ENCODE measurements at regions of chr5 and their contacts with region 1.

Region 1: DNA sequence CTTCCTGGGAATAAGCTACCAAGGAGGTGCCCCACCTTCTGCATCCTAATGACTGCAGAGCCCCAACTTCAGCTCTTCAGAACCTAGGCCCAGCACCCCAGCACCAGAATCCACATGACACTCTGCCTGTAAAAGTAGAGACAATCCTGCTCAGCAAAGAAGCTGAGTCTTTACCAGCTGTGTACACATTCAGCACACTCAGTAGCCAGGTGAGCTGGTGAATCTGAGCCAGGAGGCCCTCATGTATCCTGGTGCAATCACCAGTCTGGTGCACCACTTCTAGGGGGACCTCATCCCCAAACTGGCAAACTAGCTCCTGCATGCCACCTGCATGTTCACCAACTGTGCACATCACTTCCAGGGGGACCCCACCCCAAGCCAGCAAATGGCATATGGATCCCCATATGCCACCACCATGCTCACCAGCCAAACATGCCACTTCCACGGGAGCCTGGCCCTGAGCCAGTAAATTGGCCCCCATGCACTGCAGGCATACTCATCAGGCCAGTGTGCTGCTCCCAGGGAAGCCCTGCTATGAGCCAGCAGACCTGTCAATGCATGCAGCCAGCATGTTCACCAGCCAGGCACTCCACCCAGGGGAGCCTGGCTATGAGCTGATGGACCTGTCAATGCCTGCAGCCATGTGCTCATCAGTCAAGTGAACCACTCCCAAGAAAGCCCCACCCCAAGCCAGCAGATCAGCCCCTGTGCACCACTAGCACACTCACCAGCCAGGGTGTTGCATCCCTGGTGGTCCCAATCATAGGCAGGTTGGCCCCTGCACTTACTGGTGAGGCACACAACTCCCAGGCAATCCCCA is 15.6 kb upstream of the BTNL9 start:
- DNase-seq: no peak
- H3K4me3 ChIP-seq: no peak overlapping the region
- H3K27ac ChIP-seq: no peak overlapping the region
- H3K4me1 ChIP-seq: no peaks in the 10 kb centered on the region
- H3K27me3 ChIP-seq: peaks cover 0 to 30% (median 0%) of the 10 kb centered on the region in 4 donors
- CTCF ChIP-seq: no peak
- EP300 ChIP-seq: no peak
- POLR2A ChIP-seq: no peak

Region 2: DNA sequence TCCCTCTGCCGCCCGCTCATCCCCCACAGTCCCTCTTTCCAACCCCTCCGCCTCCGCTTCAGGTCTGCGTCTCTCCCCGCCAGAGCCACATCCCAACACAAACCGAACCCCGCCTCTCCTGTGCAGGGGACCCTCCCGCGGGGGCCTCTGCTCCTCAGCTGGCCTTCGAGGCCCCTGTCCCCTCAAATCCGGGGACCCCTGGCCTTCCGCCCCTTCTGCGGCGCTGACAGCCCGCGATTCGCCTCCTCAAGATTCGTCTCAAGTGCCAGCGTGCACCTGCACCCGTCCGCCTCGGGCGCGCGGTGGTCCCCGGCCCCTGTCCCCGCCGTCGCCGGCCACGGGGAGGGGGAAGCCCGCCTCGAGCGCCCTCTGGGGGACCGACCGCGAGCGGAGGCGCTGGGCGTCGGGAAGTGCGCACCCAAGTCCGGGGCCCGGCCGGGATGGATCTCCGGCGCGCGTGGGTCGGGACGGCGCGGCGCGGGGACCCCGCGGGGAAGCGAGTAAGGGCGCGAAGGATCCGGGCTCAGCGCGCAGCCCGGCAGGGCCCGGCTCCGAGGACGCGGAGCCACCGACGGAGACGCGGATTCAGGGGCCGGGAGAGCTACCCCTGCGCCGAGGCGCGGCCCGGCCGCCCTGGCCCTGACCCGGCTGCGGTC is 375.7 kb before region 1 on chr5:
- intact Hi-C with region 1: no loop called
- DNase-seq: no peak
- H3K4me3 ChIP-seq: peak overlapping the region; percentile 52 to 61 (median 53)
- H3K27ac ChIP-seq: peak overlapping the region in 2 of 4 donors; percentile 48 to 53
- H3K4me1 ChIP-seq: peaks cover 9 to 44% (median 27%) of the 10 kb centered on the region in 4 donors
- H3K27me3 ChIP-seq: peaks cover 0 to 93% (median 13%) of the 10 kb centered on the region in 4 donors
- CTCF ChIP-seq: peak in 1 of 3 experiments; percentile 11
- EP300 ChIP-seq: no peak
- POLR2A ChIP-seq: no peak

Region 3: DNA sequence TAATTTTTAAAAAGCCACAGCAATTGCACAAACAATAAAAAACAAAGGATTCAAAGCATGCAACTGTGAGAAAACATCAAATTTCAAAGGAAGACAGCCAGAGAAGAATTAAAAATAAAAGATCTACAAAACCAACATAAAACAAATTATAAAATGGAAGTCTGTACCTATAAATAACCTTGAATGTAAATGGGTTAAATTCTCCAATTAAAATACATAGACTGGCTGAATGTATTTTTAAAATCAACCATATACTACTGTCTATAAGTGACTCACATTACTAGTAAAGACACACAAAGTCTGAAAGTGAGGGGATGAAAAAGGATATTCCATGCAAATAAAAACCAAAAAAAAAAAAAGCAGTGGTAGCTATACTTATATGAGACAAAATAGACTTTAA is 91.8 kb before region 1 on chr5:
- intact Hi-C with region 1: loop called (anchors 5 kb)
- DNase-seq: no peak
- H3K4me3 ChIP-seq: no peak overlapping the region
- H3K27ac ChIP-seq: no peak overlapping the region
- H3K4me1 ChIP-seq: no peaks in the 10 kb centered on the region
- H3K27me3 ChIP-seq: peaks cover 0 to 17% (median 0%) of the 10 kb centered on the region in 4 donors
- CTCF ChIP-seq: no peak
- EP300 ChIP-seq: no peak
- POLR2A ChIP-seq: no peak

Region 4: GRCh38 chr5:180975338-180975737 is 49.1 kb before region 1 on chr5:
- intact Hi-C with region 1: no loop called
- DNase-seq: no peak
- H3K4me3 ChIP-seq: no peak overlapping the region
- H3K27ac ChIP-seq: no peak overlapping the region
- H3K4me1 ChIP-seq: no peaks in the 10 kb centered on the region
- H3K27me3 ChIP-seq: no peaks in the 10 kb centered on the region
- CTCF ChIP-seq: no peak
- EP300 ChIP-seq: no peak
- POLR2A ChIP-seq: no peak

Region 5: GRCh38 chr5:180990086-180990881 is 34.2 kb before region 1 on chr5:
- intact Hi-C with region 1: no loop called
- DNase-seq: no peak
- H3K4me3 ChIP-seq: no peak overlapping the region
- H3K27ac ChIP-seq: no peak overlapping the region
- H3K4me1 ChIP-seq: no peaks in the 10 kb centered on the region
- H3K27me3 ChIP-seq: no peaks in the 10 kb centered on the region
- CTCF ChIP-seq: no peak
- EP300 ChIP-seq: no peak
- POLR2A ChIP-seq: no peak

Region 6: DNA sequence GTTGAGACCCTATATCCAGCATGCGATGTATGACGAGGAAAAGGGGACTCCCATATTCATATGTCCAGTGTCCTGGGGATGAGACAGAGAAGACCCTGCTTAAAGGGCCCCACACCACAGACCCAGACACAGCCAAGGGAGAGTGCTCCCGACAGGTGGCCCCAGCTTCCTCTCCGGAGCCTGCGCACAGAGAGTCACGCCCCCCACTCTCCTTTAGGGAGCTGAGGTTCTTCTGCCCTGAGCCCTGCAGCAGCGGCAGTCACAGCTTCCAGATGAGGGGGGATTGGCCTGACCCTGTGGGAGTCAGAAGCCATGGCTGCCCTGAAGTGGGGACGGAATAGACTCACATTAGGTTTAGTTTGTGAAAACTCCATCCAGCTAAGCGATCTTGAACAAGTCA is 18.7 kb before region 1 on chr5:
- intact Hi-C with region 1: no loop called
- DNase-seq: no peak
- H3K4me3 ChIP-seq: no peak overlapping the region
- H3K27ac ChIP-seq: no peak overlapping the region
- H3K4me1 ChIP-seq: no peaks in the 10 kb centered on the region
- H3K27me3 ChIP-seq: peaks cover 0 to 17% (median 0%) of the 10 kb centered on the region in 4 donors
- CTCF ChIP-seq: no peak
- EP300 ChIP-seq: no peak
- POLR2A ChIP-seq: no peak

Measured in esophagus muscularis mucosa (tissue), 4 donors.